Activated CD4-positive, alpha-beta T cell treated with anti-CD3 and anti-CD28 coated beads for 36 hours (primary cell): ENCODE measurements at regions of chr5 and their contacts with region 1.

Region 1: GRCh38 chr5:69152731-69153130 is 14.2 kb upstream of the CCNB1 start:
- DNase-seq: no peak
- ATAC-seq: no peak
- H3K4me3 Mint-ChIP-seq: no peak overlapping the region
- H3K27ac Mint-ChIP-seq: no peak overlapping the region
- H3K4me1 Mint-ChIP-seq: no peaks in the 10 kb centered on the region
- H3K27me3 Mint-ChIP-seq: no peaks in the 10 kb centered on the region

Region 2: DNA sequence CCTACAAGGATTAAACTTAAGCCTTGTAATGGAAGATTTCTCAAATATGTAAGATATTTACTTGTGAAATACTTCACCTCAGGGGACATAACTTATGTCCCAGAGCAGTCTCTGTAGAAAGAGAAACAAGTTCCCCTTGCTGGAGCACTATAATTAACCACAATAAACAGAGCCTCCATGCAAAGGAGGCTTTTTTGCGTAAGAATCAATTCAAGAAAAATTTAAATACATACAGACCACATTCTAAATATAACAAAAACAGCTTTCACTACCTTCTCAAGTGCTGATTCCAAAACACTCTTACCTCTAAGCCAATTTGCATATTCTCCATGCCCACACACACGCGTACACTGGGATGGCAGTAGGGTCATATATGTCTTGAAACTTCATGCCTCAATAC is 16.4 kb before region 1 on chr5:
- CTCF ChIA-PET with region 1: no interaction called
- POLR2A ChIA-PET with region 1: no interaction called
- intact Hi-C with region 1: loop called in 1 of 2 experiments (anchors 2 kb)
- DNase-seq: no peak
- ATAC-seq: no peak
- H3K4me3 Mint-ChIP-seq: no peak overlapping the region
- H3K27ac Mint-ChIP-seq: no peak overlapping the region
- H3K4me1 Mint-ChIP-seq: no peaks in the 10 kb centered on the region
- H3K27me3 Mint-ChIP-seq: no peaks in the 10 kb centered on the region